Activated CD4-positive, alpha-beta memory T cell treated with anti-CD3 and anti-CD28 coated beads, Interleukin-2, amount 10 ng/mL, durations not matched to agents 7 days and 5 days (primary cell): ENCODE measurements at regions of chr9 and their contacts with region 1.

Region 1: DNA sequence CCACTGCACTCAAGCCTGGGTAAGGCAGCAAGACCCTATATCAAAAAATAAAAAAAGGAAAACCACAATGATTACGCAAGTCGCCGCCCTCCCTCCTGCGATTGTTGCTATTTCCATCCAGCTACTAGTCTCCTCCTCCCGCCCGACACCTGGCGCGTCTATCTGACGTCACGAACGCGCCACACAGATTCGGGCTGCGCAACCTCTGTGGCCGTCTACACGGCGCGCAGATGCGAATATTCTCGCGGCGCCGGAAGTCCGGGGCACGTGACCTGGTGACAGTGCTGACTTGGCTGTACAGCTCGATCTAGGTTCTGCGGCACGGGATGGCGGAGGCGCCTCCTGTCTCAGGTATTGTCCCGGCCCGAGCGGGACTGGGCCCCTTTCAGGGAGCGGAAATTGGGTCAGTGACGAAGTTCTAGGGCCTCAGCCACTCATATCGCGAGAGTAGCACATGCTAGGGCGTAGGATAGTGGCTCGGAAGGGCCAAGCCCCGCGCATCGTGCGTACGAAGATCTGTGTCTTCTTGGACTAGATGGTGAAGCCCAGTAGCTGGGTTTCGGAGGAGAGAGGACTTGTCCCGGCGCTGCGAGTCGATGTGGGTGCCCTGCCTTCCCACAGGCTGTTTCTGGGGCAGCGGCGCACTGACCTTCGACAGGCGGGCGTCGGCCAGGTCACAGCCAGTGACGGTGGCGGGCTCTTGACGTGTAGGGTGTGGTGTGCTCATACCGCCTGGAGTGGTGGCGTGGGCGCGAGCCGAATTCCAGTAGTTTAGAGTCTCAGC is at the start of gene NFX1:
- DNase-seq: peak; percentile 99
- H3K4me3 Mint-ChIP-seq: peak within 1 kb of the TSS; percentile 93
- H3K27ac Mint-ChIP-seq: peak within 1 kb of the TSS; percentile 99
- H3K4me1 Mint-ChIP-seq: peaks cover 59% of the 10 kb centered on the region
- H3K27me3 Mint-ChIP-seq: no peaks in the 10 kb centered on the region
- total RNA-seq, gene NFX1: 37.5 to 37.8 TPM

Region 2: GRCh38 chr9:33076358-33077004 is 214.0 kb before region 1 on chr9 and contains the start of gene SMU1:
- CTCF ChIA-PET with region 1: interaction called, 4 read pairs
- POLR2A ChIA-PET with region 1: interaction called, 10 read pairs
- DNase-seq: peak; percentile 97
- H3K4me3 Mint-ChIP-seq: peak within 1 kb of the TSS; percentile 100
- H3K27ac Mint-ChIP-seq: peak within 1 kb of the TSS; percentile 99
- H3K4me1 Mint-ChIP-seq: peaks cover 52% of the 10 kb centered on the region
- H3K27me3 Mint-ChIP-seq: no peaks in the 10 kb centered on the region
- total RNA-seq, gene SMU1: 22.5 to 22.9 TPM

Region 3: GRCh38 chr9:33092634-33093033 is 197.8 kb before region 1 on chr9:
- CTCF ChIA-PET with region 1: no interaction called
- POLR2A ChIA-PET with region 1: no interaction called
- DNase-seq: no peak
- H3K4me3 Mint-ChIP-seq: no peak overlapping the region
- H3K27ac Mint-ChIP-seq: no peak overlapping the region
- H3K4me1 Mint-ChIP-seq: peaks cover 10% of the 10 kb centered on the region
- H3K27me3 Mint-ChIP-seq: peaks cover 16% of the 10 kb centered on the region

Region 4: DNA sequence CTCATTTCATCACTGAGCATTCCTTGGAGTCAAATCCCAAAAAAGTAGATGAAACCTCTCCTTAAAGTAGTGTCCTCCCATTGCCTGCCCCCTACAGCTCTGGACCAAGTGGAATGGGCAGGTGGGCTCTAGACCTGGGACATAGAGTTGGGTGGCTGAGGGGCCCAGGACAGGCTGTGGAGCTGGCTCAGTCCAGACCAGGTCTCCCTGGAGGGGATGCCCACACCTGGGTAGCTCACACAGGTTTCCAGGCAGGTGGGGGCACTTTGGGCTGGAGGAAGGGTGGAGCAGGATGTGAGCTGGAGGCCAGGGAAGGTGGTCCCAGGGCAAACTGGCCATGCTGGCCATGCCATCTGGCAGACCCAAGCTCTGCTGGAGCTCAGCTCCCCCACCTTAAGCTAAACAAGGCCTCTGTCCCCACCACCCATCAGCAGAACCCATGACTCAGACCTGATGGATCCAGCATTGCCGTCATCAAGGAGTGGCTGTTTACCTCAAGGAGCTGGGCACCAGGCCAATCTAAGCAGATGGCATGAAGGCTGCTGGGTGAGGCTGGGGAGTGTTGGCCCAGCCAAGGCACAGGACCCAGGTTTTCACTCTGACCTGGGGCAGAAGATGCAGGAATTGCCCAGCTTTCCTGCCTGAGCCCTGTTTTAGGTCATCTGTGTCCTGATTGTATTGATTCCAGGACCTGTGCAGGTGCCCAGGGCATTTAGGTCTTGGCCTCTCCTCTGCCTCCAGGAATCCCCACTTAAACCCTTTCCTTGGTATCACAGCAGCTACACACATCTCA is 56.6 kb before region 1 on chr9:
- CTCF ChIA-PET with region 1: no interaction called
- POLR2A ChIA-PET with region 1: no interaction called
- DNase-seq: no peak
- H3K4me3 Mint-ChIP-seq: no peak overlapping the region
- H3K27ac Mint-ChIP-seq: no peak overlapping the region
- H3K4me1 Mint-ChIP-seq: no peaks in the 10 kb centered on the region
- H3K27me3 Mint-ChIP-seq: peaks cover 8% of the 10 kb centered on the region

Region 5: GRCh38 chr9:33264473-33265177 is 25.8 kb before region 1 on chr9 and contains the starts of genes BAG1 and CHMP5:
- CTCF ChIA-PET with region 1: interaction called, 8 read pairs
- POLR2A ChIA-PET with region 1: interaction called, 51 read pairs
- DNase-seq: peak; percentile 100
- H3K4me3 Mint-ChIP-seq: peak within 1 kb of the TSS; percentile 98
- H3K27ac Mint-ChIP-seq: peak within 1 kb of the TSS; percentile 97
- H3K4me1 Mint-ChIP-seq: peaks cover 66% of the 10 kb centered on the region
- H3K27me3 Mint-ChIP-seq: no peaks in the 10 kb centered on the region
- total RNA-seq, gene BAG1: 56.3 to 57.1 TPM
- total RNA-seq, gene CHMP5: 149 TPM

Region 6: DNA sequence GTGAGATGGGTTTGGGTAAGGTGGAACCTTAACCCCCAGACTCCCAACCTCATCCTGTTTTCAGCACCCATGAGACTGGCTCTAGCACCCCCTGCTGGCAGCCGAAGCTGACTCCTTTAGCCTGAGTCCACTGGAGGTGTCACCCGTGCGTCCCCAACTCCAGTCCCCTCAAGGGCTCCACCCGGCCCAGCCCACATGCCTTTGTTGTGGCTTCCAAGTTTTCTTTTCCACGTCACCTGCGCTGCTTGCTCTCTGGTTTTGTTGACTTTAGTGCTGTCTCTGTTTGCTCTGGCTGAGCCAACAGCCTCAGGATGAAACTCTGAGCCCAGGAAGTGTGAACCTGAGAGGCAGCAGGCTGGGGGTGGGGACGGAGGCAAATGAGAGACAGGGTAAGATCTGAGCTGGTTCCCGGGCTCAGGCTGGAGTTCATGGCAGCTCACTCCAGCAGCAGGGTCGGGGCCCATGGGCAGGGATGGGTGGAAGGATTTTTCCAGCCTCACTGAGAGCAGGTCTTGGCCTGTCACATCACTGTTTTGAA is 125.1 kb after region 1 on chr9:
- CTCF ChIA-PET with region 1: interaction called, 3 read pairs
- POLR2A ChIA-PET with region 1: interaction called, 23 read pairs
- DNase-seq: peak; percentile 96
- H3K4me3 Mint-ChIP-seq: peak overlapping the region; percentile 49
- H3K27ac Mint-ChIP-seq: peak overlapping the region; percentile 95
- H3K4me1 Mint-ChIP-seq: peaks cover 60% of the 10 kb centered on the region
- H3K27me3 Mint-ChIP-seq: no peaks in the 10 kb centered on the region

Region 7: DNA sequence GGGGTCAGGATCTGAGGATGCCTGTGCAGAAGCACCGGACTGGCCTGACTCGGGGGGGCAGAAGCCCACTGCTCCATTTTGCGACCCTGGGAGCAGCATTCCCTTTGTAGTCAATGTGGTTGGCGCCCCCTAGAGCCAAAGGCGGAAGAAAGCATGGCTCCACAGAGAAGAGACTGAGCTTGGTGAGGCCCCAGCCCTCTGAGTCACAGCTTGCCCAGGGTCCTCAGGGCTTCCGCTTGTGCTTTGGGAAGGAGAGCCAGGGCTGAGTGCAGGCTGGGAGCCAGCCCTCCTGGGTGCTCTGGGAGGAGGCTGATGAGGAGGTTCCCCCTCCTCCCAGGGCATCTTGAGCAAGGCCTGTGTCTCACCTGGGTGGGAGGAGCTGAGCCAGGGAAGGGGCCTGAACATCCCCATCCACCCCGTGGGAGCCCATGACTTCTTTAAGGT is 162.4 kb after region 1 on chr9:
- CTCF ChIA-PET with region 1: interaction called, 6 read pairs
- POLR2A ChIA-PET with region 1: interaction called, 12 read pairs
- DNase-seq: peak; percentile 64
- H3K4me3 Mint-ChIP-seq: peak overlapping the region; percentile 2
- H3K27ac Mint-ChIP-seq: peak overlapping the region; percentile 82
- H3K4me1 Mint-ChIP-seq: peaks cover 63% of the 10 kb centered on the region
- H3K27me3 Mint-ChIP-seq: no peaks in the 10 kb centered on the region

Region 8: DNA sequence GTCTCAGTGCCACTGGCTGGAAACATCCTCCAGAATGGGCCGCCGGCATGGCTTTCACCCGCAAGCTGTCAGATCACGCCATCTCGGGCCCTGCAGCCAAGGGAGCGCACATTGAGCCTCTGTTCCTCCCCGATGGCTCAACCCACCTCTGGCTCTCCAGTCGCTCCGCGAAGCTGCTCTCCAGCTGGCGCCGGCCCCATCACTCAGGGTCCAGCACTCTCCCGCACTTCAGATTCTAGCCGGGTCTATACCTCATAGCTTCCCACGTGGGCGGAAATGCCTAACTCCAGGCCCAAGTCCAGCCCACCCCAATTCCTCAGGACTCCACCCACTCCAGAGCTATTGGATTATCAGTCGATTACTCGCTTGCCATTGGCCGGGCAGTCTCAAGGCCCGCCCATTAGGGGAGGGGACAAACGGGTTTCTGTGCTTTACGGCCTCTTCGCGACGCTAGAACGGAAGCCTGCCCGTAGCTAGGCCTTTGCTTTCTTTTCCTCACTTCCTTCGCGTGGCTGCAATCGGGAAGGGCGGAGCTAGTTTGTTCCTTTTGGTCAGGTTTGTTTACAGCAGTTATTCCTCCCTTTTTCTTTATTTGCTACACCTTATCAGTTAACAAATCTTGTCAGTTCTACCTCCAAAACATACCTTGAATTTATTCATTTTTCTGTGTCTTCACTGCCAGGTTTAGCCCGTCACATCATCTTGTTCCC is 183.4 kb after region 1 on chr9 and contains the start of gene NOL6:
- CTCF ChIA-PET with region 1: interaction called, 7 read pairs
- POLR2A ChIA-PET with region 1: interaction called, 19 read pairs
- DNase-seq: peak; percentile 98
- H3K4me3 Mint-ChIP-seq: peak within 1 kb of the TSS; percentile 92
- H3K27ac Mint-ChIP-seq: peak within 1 kb of the TSS; percentile 85
- H3K4me1 Mint-ChIP-seq: peaks cover 30% of the 10 kb centered on the region
- H3K27me3 Mint-ChIP-seq: no peaks in the 10 kb centered on the region
- total RNA-seq, gene NOL6: 21.6 to 22.4 TPM